Activated CD4-positive, alpha-beta T cell treated with anti-CD3 and anti-CD28 coated beads, Interleukin-2, amount 10 ng/mL, durations not matched to agents 24 days and 14 days (primary cell): ENCODE measurements at regions of chr2 and their contacts with region 1.

Region 1: DNA sequence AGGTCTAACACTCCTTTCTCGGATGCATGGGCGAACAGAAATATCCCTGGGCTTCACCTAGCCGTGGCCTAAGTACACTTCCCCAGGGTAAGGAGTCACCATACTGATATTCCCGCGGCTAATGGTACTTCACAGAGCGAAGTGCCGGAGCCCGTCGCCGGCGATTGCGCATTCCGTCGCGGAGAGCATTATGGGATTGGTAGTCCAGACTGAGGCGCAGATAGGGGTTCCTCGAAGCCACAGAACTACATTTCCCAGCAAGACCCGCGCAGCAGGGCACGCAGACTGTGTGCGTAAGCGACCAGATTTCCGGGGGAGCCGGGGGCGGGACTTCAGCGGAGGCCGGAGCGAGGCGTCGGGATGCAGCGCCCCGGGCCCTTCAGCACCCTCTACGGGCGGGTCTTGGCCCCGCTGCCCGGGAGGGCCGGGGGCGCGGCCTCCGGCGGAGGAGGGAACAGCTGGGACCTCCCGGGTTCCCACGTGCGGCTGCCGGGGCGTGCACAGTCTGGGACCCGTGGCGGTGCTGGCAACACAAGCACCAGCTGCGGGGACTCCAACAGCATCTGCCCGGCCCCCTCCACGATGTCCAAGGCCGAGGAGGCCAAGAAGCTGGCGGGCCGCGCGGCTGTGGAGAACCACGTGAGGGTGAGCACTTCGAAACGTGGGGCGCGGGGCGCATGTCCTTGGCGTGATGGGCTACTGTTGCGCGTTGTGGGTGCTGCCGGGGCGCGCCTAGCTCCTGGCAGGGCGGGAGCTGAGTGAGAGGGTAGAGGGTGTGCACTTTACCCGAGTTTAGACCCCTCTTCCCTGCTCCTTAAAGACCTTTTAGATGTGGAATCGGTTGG is at the start of gene RPIA:
- DNase-seq: peak; percentile 100
- H3K4me3 Mint-ChIP-seq: peak within 1 kb of the TSS; percentile 99
- H3K27ac Mint-ChIP-seq: peak within 1 kb of the TSS; percentile 97
- H3K4me1 Mint-ChIP-seq: peaks cover 45% of the 10 kb centered on the region
- H3K27me3 Mint-ChIP-seq: no peaks in the 10 kb centered on the region
- total RNA-seq, gene RPIA: 80.6 and 86.5 TPM in 2 replicates

Region 2: GRCh38 chr2:88600038-88600465 is 91.5 kb before region 1 on chr2:
- intact Hi-C with region 1: loop called (anchors 1 kb)
- DNase-seq: peak; percentile 86
- H3K4me3 Mint-ChIP-seq: no peak overlapping the region
- H3K27ac Mint-ChIP-seq: peak overlapping the region; percentile 64
- H3K4me1 Mint-ChIP-seq: peaks cover 24% of the 10 kb centered on the region
- H3K27me3 Mint-ChIP-seq: no peaks in the 10 kb centered on the region

Region 3: DNA sequence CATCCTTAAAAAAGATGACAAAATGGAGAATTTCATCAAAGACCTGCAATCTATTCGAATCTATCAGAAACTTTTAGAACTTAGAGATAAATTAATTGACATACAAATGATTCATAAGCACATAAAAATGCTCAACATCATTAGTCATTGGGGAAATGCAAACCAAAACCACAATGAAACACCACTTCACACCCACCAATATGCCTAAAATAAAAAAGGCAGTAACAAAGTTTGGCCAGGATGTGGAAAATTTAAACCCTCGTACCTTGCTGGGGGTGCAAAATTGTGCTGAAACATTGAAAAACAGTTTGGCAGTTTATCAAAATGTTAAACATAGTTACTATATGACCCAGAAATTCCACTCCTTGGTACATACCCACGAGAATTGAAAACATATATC is 52.8 kb before region 1 on chr2:
- intact Hi-C with region 1: loop called (anchors 2 kb)
- DNase-seq: peak; percentile 76
- H3K4me3 Mint-ChIP-seq: peak overlapping the region; percentile 48
- H3K27ac Mint-ChIP-seq: peak overlapping the region; percentile 86
- H3K4me1 Mint-ChIP-seq: peaks cover 44% of the 10 kb centered on the region
- H3K27me3 Mint-ChIP-seq: no peaks in the 10 kb centered on the region

Region 4: GRCh38 chr2:88765154-88765900 is 73.8 kb after region 1 on chr2:
- intact Hi-C with region 1: loop called (anchors 1 kb)
- DNase-seq: peak; percentile 85
- H3K4me3 Mint-ChIP-seq: peak overlapping the region; percentile 83
- H3K27ac Mint-ChIP-seq: peak overlapping the region; percentile 39
- H3K4me1 Mint-ChIP-seq: peaks cover 5% of the 10 kb centered on the region
- H3K27me3 Mint-ChIP-seq: peaks cover 31% of the 10 kb centered on the region